PC-9 (cell line): ENCODE measurements at regions of chr1 and their contacts with region 1.

Region 1: GRCh38 chr1:20212685-20213331 is 26.5 kb upstream of the PLA2G2C start:
- DNase-seq: peak; percentile 90 to 92
- H3K4me3 ChIP-seq: peak overlapping the region; percentile 47; the same call in 1 of the 2 replicates
- H3K27ac ChIP-seq: peak overlapping the region; percentile 99
- H3K4me1 ChIP-seq: peaks cover 58% of the 10 kb centered on the region
- H3K27me3 ChIP-seq: no peaks in the 10 kb centered on the region
- CTCF ChIP-seq: peak; percentile 91

Region 2: GRCh38 chr1:19918057-19918456 is 294.8 kb before region 1 on chr1:
- CTCF ChIA-PET with region 1: interaction called, 3 read pairs
- POLR2A ChIA-PET with region 1: no interaction called
- intact Hi-C with region 1: loop called (anchors 5 kb)
- DNase-seq: peak; percentile 57 to 75
- H3K4me3 ChIP-seq: no peak overlapping the region
- H3K27ac ChIP-seq: no peak overlapping the region
- H3K4me1 ChIP-seq: peaks cover 26% of the 10 kb centered on the region
- H3K27me3 ChIP-seq: no peaks in the 10 kb centered on the region
- CTCF ChIP-seq: peak; percentile 87

Region 3: DNA sequence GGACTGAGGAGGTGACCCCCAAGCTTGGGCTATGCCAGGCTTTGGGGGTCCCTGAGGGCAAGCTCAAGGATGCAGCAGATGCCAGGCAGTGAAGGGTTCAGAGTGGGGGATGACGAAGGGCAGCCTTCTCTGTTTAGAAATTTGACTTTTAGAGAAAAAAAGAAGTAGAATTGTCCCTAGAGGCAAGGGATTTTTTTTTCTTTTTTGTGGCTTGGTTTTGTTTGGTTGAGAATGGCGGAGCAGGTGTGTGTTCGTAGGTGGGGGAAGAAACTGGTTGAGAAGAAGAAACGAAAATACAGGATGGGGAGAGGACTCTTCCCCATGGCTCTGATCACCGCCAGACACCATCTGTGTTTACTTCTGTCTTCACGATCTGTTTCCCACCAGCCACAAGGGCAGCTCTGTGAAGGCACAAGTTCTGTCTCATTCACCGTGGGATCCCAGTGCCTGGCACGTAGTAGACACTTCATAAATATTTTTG is 134.6 kb before region 1 on chr1:
- CTCF ChIA-PET with region 1: no interaction called
- POLR2A ChIA-PET with region 1: no interaction called
- intact Hi-C with region 1: no loop called
- DNase-seq: no peak
- H3K4me3 ChIP-seq: no peak overlapping the region
- H3K27ac ChIP-seq: no peak overlapping the region
- H3K4me1 ChIP-seq: no peaks in the 10 kb centered on the region
- H3K27me3 ChIP-seq: no peaks in the 10 kb centered on the region
- CTCF ChIP-seq: no peak

Region 4: DNA sequence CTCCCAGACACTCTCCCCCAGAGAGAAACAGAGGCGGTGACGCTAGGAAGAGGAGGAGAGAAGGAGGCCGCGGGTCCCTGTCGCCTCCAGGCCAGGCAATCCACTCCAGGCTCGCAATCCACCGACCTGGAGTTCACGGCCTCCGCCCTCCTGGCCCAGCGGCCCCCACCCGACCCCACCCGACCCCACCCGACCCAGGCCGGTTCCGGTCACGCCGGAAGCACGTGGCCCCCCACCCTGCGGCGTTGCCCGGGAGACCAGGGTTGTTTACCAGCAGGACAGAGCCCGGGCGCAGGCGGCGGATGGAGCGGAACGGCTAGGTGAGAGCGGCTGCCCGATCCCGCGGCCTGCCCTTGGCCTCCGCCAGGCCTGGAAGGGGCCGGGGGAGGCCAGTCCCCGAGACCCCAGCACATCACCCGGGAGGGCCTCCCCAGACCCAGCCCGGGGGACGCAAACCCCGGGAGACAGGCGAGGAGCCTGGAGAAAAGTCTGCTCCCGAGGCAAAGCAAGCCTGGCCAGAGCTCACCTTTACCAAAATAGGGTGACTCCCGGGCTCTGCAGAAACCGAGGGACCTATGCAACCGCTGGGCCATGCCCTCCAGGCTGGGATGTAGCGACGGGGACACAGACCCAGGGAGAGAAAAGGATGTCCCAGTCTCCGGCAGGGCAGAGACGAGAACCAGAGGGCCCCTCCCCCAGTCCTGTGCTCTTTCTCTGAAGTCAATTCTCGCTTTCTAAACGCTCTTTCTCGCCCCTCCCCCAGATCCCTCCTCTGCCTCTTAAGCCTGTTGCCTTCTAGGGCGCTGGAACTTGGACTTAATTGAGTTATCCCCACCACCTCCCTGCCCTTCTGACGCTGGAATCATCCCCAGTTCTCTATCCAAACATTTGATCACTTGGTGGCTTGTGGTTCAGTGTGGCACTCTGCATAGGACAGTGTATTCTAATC is 26.7 kb before region 1 on chr1 and contains the starts of genes PLA2G2C and UBXN10:
- CTCF ChIA-PET with region 1: interaction called, 12 read pairs
- POLR2A ChIA-PET with region 1: interaction called, 6 read pairs
- intact Hi-C with region 1: loop called (anchors 1 kb)
- DNase-seq: peak; percentile 53 to 80
- H3K4me3 ChIP-seq: peak within 1 kb of the TSS; percentile 74
- H3K27ac ChIP-seq: peak within 1 kb of the TSS; percentile 65
- H3K4me1 ChIP-seq: peaks cover 54% of the 10 kb centered on the region
- H3K27me3 ChIP-seq: no peaks in the 10 kb centered on the region
- CTCF ChIP-seq: no peak
- total RNA-seq, gene PLA2G2C: 0.48 and 0.55 TPM in 2 replicates
- total RNA-seq, gene UBXN10: 9.4 and 11.9 TPM in 2 replicates

Region 5: GRCh38 chr1:20279509-20279908 is 66.7 kb after region 1 on chr1:
- CTCF ChIA-PET with region 1: interaction called, 18 read pairs
- POLR2A ChIA-PET with region 1: no interaction called
- intact Hi-C with region 1: no loop called
- DNase-seq: peak; percentile 51 to 89
- H3K4me3 ChIP-seq: no peak overlapping the region
- H3K27ac ChIP-seq: peak overlapping the region; percentile 68
- H3K4me1 ChIP-seq: peaks cover 36% of the 10 kb centered on the region
- H3K27me3 ChIP-seq: no peaks in the 10 kb centered on the region
- CTCF ChIP-seq: no peak

Region 6: GRCh38 chr1:20339811-20340457 is 127.1 kb after region 1 on chr1:
- CTCF ChIA-PET with region 1: no interaction called
- POLR2A ChIA-PET with region 1: no interaction called
- intact Hi-C with region 1: no loop called
- DNase-seq: no peak
- H3K4me3 ChIP-seq: no peak overlapping the region
- H3K27ac ChIP-seq: no peak overlapping the region
- H3K4me1 ChIP-seq: no peaks in the 10 kb centered on the region
- H3K27me3 ChIP-seq: no peaks in the 10 kb centered on the region
- CTCF ChIP-seq: no peak

Region 7: DNA sequence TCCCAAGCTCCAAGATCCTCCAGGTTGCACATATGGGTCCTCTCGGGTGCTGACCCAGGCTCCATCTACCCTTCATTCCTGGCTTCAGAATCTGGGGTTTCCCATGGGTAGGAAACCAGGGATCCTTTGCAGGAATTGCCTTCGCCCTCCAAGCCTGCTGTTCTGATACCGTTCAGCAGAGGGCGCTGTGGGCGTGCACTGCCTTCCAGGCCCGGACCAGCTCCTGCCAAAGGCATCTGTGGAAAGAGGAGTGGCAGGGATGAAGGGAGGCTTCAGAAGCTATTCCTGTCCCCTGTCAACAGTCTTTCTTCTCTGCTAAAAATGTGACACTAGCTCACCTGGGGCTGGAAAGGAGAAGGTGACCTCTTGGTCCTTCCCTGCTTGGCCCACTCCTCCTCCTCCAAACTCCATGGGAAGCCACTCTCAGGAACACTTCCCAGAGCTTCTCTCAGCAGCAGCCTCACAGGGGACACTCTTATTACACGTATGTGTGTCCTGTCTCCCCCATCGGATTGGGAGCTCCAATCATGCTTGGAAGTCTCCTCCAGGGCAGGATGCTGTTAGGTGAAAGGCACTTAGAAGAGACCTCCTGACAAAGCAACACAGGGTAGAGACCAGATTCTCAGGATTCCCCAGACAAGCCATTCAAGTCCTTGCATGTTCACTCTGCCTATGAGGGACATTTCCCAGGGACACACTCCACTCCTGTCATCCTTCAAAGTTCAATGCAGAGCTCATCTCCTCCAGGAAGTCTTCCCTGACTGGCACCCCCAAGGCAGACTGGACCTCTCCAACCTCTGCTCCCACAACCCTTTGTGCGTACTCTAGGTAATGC is 149.2 kb after region 1 on chr1:
- CTCF ChIA-PET with region 1: interaction called, 23 read pairs
- POLR2A ChIA-PET with region 1: interaction called, 5 read pairs
- intact Hi-C with region 1: loop called (anchors 1 kb)
- DNase-seq: peak in 1 of 2 experiments; percentile 80
- H3K4me3 ChIP-seq: no peak overlapping the region
- H3K27ac ChIP-seq: no peak overlapping the region
- H3K4me1 ChIP-seq: peaks cover 41% of the 10 kb centered on the region
- H3K27me3 ChIP-seq: no peaks in the 10 kb centered on the region
- CTCF ChIP-seq: peak; percentile 90

Region 8: GRCh38 chr1:20493839-20494608 is 281.2 kb after region 1 on chr1:
- CTCF ChIA-PET with region 1: interaction called, 23 read pairs
- POLR2A ChIA-PET with region 1: no interaction called
- intact Hi-C with region 1: loop called (anchors 1 kb)
- DNase-seq: peak; percentile 80 to 91
- H3K4me3 ChIP-seq: no peak overlapping the region
- H3K27ac ChIP-seq: peak overlapping the region; percentile 97
- H3K4me1 ChIP-seq: peaks cover 39% of the 10 kb centered on the region
- H3K27me3 ChIP-seq: no peaks in the 10 kb centered on the region
- CTCF ChIP-seq: peak; percentile 93